Psoas muscle (tissue), 8 donors: ENCODE measurements at regions of chr14 and their contacts with region 1.

Region 1: GRCh38 chr14:54566410-54567223 is at the start of gene SAMD4A:
- DNase-seq: peak; percentile 79 to 92
- ATAC-seq: peak; percentile 33 to 54 (median 44)
- H3K4me3 ChIP-seq: peak within 1 kb of the TSS; percentile 86
- H3K27ac ChIP-seq: peak within 1 kb of the TSS; percentile 99
- H3K4me1 ChIP-seq: peaks cover 43% of the 10 kb centered on the region
- H3K27me3 ChIP-seq: no peaks in the 10 kb centered on the region
- CTCF ChIP-seq: peak; percentile 36
- total RNA-seq, gene SAMD4A: 66.7 to 139 (median 76.3) TPM

Region 2: GRCh38 chr14:54652188-54652587 is 85.6 kb after region 1 on chr14:
- intact Hi-C with region 1: loop called in 1 of 2 experiments (anchors 5 kb)
- DNase-seq: peak; percentile 84 to 89
- ATAC-seq: peak; percentile 73 to 79 (median 76)
- H3K4me3 ChIP-seq: peak overlapping the region; percentile 51
- H3K27ac ChIP-seq: peak overlapping the region; percentile 88
- H3K4me1 ChIP-seq: peaks cover 71% of the 10 kb centered on the region
- H3K27me3 ChIP-seq: peaks cover 0 to 4% (median 0%) of the 10 kb centered on the region in 3 donors
- CTCF ChIP-seq: no peak

Region 3: DNA sequence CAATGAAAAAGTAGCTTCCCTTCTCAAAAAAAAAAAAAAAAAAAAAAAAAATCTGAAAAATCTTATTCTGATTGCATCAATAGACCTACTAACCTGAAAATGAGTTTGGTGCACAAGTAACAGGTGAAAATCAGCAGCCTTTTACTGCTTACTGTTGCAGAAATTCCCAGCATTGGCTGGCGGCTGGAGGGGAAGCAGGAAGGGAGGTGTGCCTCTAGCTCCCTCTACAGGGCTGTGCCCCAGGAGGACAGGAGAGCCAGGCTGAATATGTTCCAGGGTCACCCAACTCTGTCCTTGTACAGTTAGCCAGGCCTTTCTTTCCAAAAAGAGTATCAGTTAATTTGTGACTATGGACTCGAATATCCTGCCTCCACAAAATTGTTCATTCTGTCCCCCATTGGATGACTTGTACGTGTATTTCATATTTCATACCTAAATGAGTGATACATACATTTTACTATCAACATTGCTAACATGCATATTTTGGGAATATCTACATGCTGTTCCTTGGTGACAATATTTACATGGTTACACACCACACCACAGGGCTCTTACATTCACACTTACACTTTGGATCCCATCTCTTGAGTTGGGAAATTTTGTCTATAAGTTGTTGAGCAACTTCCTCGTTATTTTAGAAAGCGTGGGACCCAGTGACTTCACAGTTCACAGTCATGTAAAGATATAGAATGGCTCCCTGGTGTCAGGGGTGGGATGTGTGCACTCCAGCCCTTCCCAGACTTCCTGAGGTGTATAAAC is 125.1 kb after region 1 on chr14:
- intact Hi-C with region 1: loop called (anchors 2 to 5 kb)
- DNase-seq: peak; percentile 77 to 90
- ATAC-seq: peak; percentile 72 to 81 (median 77)
- H3K4me3 ChIP-seq: no peak overlapping the region
- H3K27ac ChIP-seq: peak overlapping the region; percentile 88
- H3K4me1 ChIP-seq: peaks cover 65% of the 10 kb centered on the region
- H3K27me3 ChIP-seq: no peaks in the 10 kb centered on the region
- CTCF ChIP-seq: peak; percentile 86

Region 4: DNA sequence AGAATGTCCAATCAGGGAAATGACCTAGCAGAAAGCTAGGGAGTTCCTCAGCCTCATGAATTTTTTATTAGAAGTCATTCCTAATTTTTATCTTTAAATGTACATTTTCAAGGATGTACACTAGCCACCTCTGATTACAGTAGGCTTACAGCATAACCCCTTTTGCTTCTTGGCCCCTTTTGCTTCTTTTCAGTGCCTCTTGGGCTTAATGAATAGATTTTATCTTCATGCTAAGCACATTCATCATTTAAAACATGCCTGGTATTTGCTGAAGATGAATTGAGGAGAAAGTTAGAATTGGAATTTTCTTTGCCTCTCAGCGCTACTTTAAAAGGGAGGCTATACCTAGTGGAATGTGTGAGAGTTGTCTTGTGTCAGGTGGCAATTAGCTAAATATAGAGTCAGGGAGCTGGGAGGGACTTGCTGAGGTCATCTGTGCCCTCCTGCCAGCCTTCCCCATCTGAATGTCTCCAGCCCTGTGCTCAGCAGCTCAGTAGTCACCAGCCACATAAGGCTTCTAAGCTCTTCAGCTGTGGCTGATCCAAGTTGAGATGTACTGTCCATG is 132.4 kb after region 1 on chr14:
- intact Hi-C with region 1: loop called (anchors 1 to 5 kb)
- DNase-seq: peak; percentile 52 to 87
- ATAC-seq: peak; percentile 91 to 94 (median 93)
- H3K4me3 ChIP-seq: peak overlapping the region; percentile 47
- H3K27ac ChIP-seq: peak overlapping the region; percentile 88
- H3K4me1 ChIP-seq: peaks cover 81% of the 10 kb centered on the region
- H3K27me3 ChIP-seq: no peaks in the 10 kb centered on the region
- CTCF ChIP-seq: no peak

Region 5: GRCh38 chr14:54773171-54773975 is 206.8 kb after region 1 on chr14:
- intact Hi-C with region 1: loop called (anchors 1 to 2 kb)
- DNase-seq: peak; percentile 84 to 91
- ATAC-seq: peak; percentile 81 to 85 (median 82)
- H3K4me3 ChIP-seq: peak overlapping the region; percentile 1
- H3K27ac ChIP-seq: peak overlapping the region; percentile 88
- H3K4me1 ChIP-seq: peaks cover 73% of the 10 kb centered on the region
- H3K27me3 ChIP-seq: no peaks in the 10 kb centered on the region
- CTCF ChIP-seq: peak; percentile 69

Region 6: DNA sequence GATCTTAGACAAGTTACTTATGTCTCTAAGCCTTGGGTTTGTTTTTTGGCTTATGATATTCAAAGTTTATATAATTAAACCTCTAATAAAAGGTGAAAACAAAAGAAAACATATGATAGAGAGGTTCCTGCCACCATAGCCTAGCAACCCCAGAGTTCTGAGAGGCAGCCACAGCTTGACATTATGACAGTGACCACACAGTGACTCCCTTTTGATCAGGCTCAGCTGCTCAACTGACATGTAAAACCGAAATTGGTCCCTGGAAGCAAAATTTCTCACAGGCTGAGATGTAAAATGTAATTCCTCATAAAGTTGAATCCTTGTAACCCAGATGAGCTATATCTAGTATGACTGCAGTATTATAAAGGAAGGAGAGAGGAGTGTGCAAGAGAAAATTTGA is 227.5 kb after region 1 on chr14:
- intact Hi-C with region 1: no loop called
- DNase-seq: no peak
- ATAC-seq: no peak
- H3K4me3 ChIP-seq: no peak overlapping the region
- H3K27ac ChIP-seq: no peak overlapping the region
- H3K4me1 ChIP-seq: no peaks in the 10 kb centered on the region
- H3K27me3 ChIP-seq: no peaks in the 10 kb centered on the region
- CTCF ChIP-seq: no peak

Region 7: GRCh38 chr14:54805521-54806322 is 239.1 kb after region 1 on chr14:
- intact Hi-C with region 1: loop called (anchors 2 to 5 kb)
- DNase-seq: peak; percentile 85 to 92
- ATAC-seq: peak; percentile 91 to 99 (median 94)
- H3K4me3 ChIP-seq: peak overlapping the region; percentile 46
- H3K27ac ChIP-seq: no peak overlapping the region
- H3K4me1 ChIP-seq: no peaks in the 10 kb centered on the region
- H3K27me3 ChIP-seq: peaks cover 0 to 1% (median 0%) of the 10 kb centered on the region in 3 donors
- CTCF ChIP-seq: peak; percentile 98